ENCODE measurements at regions of chr12 and their contacts with region 1.

Region 1: GRCh38 chr12:48890657-48891418 is 25.2 kb upstream of the RND1 start:
- DNase-seq: peak; percentile 87
- H3K4me3 Mint-ChIP-seq: peak overlapping the region; percentile 32
- H3K27ac Mint-ChIP-seq: no peak overlapping the region
- H3K4me1 Mint-ChIP-seq: peaks cover 7% of the 10 kb centered on the region
- H3K27me3 Mint-ChIP-seq: peaks cover 12% of the 10 kb centered on the region

Region 2: GRCh38 chr12:48865434-48866290 is 25.2 kb before region 1 on chr12 and contains the start of gene RND1:
- CTCF ChIA-PET with region 1: interaction called, 36 read pairs
- POLR2A ChIA-PET with region 1: interaction called, 7 read pairs
- intact Hi-C with region 1: no loop called
- DNase-seq: peak; percentile 91
- H3K4me3 Mint-ChIP-seq: peak within 1 kb of the TSS; percentile 85
- H3K27ac Mint-ChIP-seq: peak within 1 kb of the TSS; percentile 74
- H3K4me1 Mint-ChIP-seq: peaks cover 20% of the 10 kb centered on the region
- H3K27me3 Mint-ChIP-seq: peaks cover 14% of the 10 kb centered on the region
- total RNA-seq, gene RND1: 2.4 to 3.5 TPM

Region 3: DNA sequence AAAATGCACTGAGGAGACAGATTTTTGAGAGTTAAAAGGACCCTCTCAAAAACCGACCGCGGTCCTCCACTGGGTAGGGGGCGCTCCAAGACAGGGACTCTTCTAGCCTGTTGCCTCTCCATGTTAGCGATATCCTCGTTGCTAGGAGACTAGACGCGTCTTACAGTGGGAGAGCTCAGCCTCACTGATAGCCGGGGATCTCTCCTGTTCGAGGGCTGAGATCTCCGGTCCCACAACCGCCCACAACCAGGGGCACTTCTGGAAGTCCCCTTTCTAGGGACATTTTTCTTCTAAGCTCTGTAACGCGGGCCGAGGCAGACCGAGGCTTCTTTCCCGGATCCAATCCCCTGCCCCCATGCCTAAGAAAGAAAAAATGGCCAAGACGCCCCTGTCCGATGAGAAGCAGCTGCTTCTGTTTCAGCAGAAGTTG is 13.2 kb after region 1 on chr12:
- CTCF ChIA-PET with region 1: interaction called, 66 read pairs
- POLR2A ChIA-PET with region 1: no interaction called
- intact Hi-C with region 1: no loop called
- DNase-seq: peak; percentile 89
- H3K4me3 Mint-ChIP-seq: peak overlapping the region; percentile 70
- H3K27ac Mint-ChIP-seq: no peak overlapping the region
- H3K4me1 Mint-ChIP-seq: peaks cover 2% of the 10 kb centered on the region
- H3K27me3 Mint-ChIP-seq: no peaks in the 10 kb centered on the region

Region 4: DNA sequence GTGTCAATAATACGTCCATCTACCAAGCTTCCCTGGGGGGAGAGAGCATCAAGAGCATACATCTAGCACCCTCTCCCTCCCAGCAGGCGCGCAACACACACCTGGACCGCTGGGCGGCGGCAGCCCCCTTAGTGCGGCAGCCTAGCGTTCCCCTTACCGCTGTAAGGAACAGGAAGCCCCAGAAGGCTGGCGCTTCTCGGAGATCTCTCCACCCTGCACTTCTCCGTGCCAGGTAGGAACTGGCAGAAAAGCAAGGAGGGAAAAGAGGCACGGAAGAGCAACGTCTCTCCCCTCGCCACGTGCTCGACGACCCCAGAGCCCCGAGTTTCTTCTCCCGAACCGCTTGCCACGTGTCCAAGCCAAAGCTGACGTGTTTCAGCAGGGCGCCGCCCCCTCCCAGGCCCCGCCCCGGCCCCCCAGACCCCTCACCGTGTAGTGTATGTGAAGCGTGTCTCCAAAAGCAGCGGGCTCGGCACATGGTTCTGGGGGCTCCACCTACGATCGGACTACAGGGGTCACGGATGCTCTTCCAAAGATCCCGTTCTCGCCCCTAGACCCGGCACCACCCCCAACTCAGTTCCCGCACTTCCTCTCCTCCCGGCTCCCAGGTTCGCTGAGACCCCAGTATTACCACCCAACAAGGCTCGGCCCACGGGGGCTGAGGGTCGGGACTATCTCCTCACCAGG is 33.9 kb after region 1 on chr12:
- CTCF ChIA-PET with region 1: interaction called, 10 read pairs
- POLR2A ChIA-PET with region 1: no interaction called
- intact Hi-C with region 1: no loop called
- DNase-seq: peak; percentile 82
- H3K4me3 Mint-ChIP-seq: peak overlapping the region; percentile 88
- H3K27ac Mint-ChIP-seq: peak overlapping the region; percentile 94
- H3K4me1 Mint-ChIP-seq: peaks cover 47% of the 10 kb centered on the region
- H3K27me3 Mint-ChIP-seq: no peaks in the 10 kb centered on the region

Measured in activated CD4-positive, alpha-beta memory T cell treated with anti-CD3 and anti-CD28 coated beads for 36 hours (primary cell).